ENCODE measurements at regions of chr3 and their contacts with region 1.

Region 1: DNA sequence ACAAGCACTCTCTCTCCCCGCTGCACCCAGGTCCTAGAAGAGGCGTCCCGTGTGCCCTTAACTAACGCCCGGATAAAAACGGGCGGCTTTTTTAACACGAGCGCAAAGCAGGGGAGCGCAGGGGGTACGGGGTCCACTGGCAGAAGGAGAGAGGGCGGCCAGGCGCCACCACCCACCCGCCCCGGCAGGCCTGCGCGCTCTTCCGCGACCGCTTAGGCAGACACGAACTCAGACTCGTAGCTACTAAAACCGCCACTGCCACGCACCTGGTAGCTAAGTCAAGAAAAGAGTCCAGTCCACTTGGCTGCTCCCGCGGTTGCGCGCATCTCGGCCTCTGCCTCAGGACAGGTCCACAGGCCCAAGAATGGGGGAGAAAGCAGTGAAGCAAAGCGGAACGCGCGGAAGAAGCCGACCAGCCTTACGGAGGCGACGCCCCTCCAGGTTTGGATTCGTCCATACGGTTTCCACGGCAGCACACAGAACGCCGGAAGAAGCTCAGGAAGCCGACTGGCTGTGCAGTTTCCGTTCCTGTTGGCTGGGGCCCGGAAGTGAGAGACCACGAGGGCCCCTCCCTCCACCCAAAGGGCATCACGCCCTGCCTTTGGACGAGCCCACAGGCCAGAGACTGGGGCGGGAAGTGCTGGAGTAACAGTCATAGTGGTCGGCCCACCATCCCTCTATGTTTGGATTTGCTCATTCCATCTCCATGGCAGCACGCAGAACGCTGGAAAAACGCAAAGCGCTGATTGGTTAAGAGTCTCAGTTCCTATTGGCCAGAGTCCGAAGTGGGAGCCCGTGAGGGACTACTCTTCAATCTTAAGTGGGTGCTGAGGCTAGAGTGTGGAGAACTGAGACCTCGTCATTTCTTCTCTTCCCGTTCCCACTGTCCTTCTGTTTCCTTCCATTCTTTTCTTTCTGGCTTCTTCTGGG is at the start of gene ULK4:
- DNase-seq: peak; percentile 95
- H3K4me3 Mint-ChIP-seq: peak within 1 kb of the TSS; percentile 95
- H3K27ac Mint-ChIP-seq: peak within 1 kb of the TSS; percentile 93
- H3K4me1 Mint-ChIP-seq: peaks cover 16% of the 10 kb centered on the region
- H3K27me3 Mint-ChIP-seq: peaks cover 2% of the 10 kb centered on the region
- total RNA-seq, gene ULK4: 7.3 and 8.1 TPM in 2 replicates

Region 2: GRCh38 chr3:40309418-40309924 is 1652.5 kb before region 1 on chr3 and contains the start of gene EIF1B:
- intact Hi-C with region 1: loop called (anchors 1 kb)
- DNase-seq: peak; percentile 98
- H3K4me3 Mint-ChIP-seq: peak within 1 kb of the TSS; percentile 96
- H3K27ac Mint-ChIP-seq: peak within 1 kb of the TSS; percentile 95
- H3K4me1 Mint-ChIP-seq: peaks cover 28% of the 10 kb centered on the region
- H3K27me3 Mint-ChIP-seq: no peaks in the 10 kb centered on the region
- total RNA-seq, gene EIF1B: 49.1 and 49.6 TPM in 2 replicates

Region 3: GRCh38 chr3:40524568-40525285 is 1437.3 kb before region 1 on chr3 and contains the start of gene ZNF621:
- intact Hi-C with region 1: loop called (anchors 1 kb)
- DNase-seq: peak; percentile 84
- H3K4me3 Mint-ChIP-seq: peak within 1 kb of the TSS; percentile 97
- H3K27ac Mint-ChIP-seq: peak within 1 kb of the TSS; percentile 95
- H3K4me1 Mint-ChIP-seq: peaks cover 26% of the 10 kb centered on the region
- H3K27me3 Mint-ChIP-seq: no peaks in the 10 kb centered on the region
- total RNA-seq, gene ZNF621: 18.3 and 19.0 TPM in 2 replicates

Region 4: DNA sequence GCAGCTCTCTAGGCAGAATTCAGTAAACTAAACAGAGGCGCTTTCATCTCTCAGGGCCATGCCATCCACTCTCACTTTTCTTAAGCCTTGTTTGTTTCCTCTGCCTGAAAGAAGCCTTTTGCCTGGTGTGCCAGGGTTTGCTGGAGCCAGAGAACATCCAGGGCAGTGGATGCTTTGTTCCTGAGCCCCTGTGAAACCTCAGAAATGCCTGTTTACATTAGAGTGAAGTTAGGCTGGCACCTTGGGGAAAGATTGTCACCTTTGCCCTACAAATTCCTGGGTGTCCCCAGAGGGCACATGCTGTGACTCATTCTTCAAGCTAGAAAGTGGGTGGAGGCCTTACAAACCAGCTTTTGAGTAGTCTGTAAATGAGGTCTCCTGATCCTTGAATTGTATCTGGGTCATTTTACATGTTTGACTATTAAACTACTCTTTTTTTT is 118.5 kb after region 1 on chr3:
- intact Hi-C with region 1: loop called (anchors 5 kb)
- DNase-seq: no peak
- H3K4me3 Mint-ChIP-seq: peak overlapping the region; percentile 38
- H3K27ac Mint-ChIP-seq: peak overlapping the region; percentile 84
- H3K4me1 Mint-ChIP-seq: peaks cover 51% of the 10 kb centered on the region
- H3K27me3 Mint-ChIP-seq: no peaks in the 10 kb centered on the region

Region 5: DNA sequence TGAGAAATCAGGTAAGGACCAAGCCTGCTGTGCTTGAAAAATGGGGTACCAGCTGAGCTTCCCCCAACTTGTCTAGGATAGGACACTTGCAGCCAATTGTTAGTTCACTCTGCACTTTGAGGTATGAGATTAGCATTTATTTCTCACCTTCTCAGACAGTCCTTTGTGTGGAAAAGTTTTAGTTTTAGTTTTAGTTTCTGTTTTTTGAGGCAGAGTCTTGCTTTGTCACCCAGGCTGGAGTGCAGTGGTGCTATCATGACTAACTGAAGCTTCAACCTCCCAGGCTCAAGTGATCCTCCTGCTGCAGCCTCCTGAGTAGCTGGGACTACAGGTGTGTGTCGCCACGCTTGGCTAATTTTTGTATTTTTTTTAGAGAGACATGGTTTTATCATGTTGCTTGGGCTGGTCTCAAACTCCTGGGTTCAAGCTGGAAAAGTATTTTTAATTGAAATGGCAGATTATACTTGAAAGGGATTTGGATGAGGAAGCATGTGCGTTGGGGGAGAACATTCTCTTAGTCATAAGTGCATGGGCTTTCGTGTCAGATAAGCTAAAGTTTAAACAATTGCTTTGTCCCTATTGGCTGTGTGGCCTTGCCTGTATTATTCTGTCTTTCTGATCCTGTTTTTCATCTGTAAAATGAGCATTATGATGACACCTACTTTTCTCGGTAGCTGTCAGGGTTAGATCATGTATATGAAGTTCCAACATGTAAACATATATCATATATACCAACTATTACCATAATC is 329.1 kb after region 1 on chr3:
- intact Hi-C with region 1: no loop called
- DNase-seq: no peak
- H3K4me3 Mint-ChIP-seq: no peak overlapping the region
- H3K27ac Mint-ChIP-seq: no peak overlapping the region
- H3K4me1 Mint-ChIP-seq: no peaks in the 10 kb centered on the region
- H3K27me3 Mint-ChIP-seq: peaks cover 2% of the 10 kb centered on the region

Region 6: DNA sequence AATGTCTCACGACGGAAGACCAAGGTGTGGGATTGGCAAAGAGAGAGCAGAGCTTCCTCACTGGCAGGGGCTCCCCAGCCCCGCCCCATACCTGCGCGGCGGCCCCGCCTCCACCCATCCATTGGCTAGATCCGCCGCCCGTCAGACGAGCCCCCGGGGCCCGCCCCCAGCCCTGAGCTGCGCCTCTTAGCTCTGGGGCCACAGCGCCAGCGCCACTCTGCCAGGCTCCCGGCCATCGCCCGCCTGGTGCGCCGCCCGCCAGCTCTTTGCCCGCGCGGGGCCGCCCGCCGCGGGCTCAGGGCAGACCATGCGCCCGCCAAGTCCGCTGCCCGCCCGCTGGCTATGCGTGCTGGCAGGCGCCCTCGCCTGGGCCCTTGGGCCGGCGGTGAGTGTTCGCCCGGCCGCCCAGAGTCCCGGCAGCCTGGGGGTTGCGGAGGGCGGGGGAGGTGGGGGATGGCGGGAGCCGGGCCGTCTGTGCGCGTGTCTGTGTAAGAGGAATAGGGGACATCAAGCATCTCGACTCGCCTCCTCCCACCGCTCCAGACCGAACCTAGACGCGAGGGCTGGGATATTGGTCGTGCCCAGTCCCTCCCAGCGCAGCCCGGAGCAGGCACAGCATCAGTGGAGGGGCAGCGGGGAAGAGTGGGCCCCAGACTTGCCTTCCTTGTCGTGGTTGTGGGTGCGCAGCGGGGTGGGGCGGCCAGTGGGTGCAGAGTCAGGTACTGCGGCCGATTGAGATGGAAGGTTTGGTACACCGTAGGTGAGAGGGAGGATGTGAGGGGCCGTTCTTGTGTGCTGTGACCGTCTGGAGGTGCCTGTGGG is 540.6 kb after region 1 on chr3 and contains the start of gene VIPR1:
- intact Hi-C with region 1: loop called (anchors 10 kb)
- DNase-seq: peak; percentile 85
- H3K4me3 Mint-ChIP-seq: peak within 1 kb of the TSS; percentile 86
- H3K27ac Mint-ChIP-seq: no peak within 1 kb of the TSS
- H3K4me1 Mint-ChIP-seq: peaks cover 31% of the 10 kb centered on the region
- H3K27me3 Mint-ChIP-seq: peaks cover 26% of the 10 kb centered on the region
- total RNA-seq, gene VIPR1: 0.69 and 0.88 TPM in 2 replicates